Activated CD4-positive, alpha-beta T cell treated with anti-CD3 and anti-CD28 coated beads, Interleukin-2, amount 10 ng/mL, durations not matched to agents 7 days and 5 days (primary cell): ENCODE measurements at regions of chr10 and their contacts with region 1.

Region 1: DNA sequence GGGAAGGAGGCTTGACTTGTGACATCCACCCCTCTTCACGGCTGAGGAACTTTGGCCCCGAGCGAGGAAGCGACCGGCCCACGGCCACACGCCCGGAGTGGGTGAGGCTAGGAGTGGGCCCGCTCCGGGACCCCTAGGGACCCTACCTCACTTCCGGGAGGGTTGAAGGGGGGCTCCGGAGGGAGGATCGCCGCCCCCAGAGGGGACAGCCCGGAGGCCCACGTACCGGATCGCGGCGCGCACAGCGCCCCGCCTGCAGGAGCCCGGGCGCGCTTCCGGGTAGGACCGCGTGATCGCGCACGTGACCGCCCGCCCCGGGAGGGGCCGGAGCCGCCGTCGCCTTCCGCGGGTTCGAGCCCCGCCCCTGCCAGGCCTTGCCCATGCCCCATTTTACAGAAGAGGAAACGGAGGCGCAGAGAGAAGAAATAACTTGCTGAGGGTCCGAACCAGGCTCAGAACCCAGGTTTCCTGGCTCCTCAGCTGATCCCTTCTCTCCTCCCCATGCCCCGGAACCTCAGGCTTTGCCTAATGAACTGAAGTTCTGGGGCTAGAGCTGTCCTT is at the start of gene HPS1:
- DNase-seq: peak; percentile 83
- H3K4me3 Mint-ChIP-seq: peak within 1 kb of the TSS; percentile 94
- H3K27ac Mint-ChIP-seq: peak within 1 kb of the TSS; percentile 94
- H3K4me1 Mint-ChIP-seq: peaks cover 40% of the 10 kb centered on the region
- H3K27me3 Mint-ChIP-seq: peaks cover 14% of the 10 kb centered on the region
- total RNA-seq, gene HPS1: 95.5 to 102 TPM

Region 2: GRCh38 chr10:98423691-98424120 is 23.0 kb before region 1 on chr10:
- CTCF ChIA-PET with region 1: interaction called, 10 read pairs
- POLR2A ChIA-PET with region 1: no interaction called
- DNase-seq: no peak
- H3K4me3 Mint-ChIP-seq: no peak overlapping the region
- H3K27ac Mint-ChIP-seq: no peak overlapping the region
- H3K4me1 Mint-ChIP-seq: no peaks in the 10 kb centered on the region
- H3K27me3 Mint-ChIP-seq: no peaks in the 10 kb centered on the region

Region 3: GRCh38 chr10:98460837-98461499 is 14.2 kb after region 1 on chr10:
- CTCF ChIA-PET with region 1: no interaction called
- POLR2A ChIA-PET with region 1: no interaction called
- DNase-seq: no peak
- H3K4me3 Mint-ChIP-seq: no peak overlapping the region
- H3K27ac Mint-ChIP-seq: no peak overlapping the region
- H3K4me1 Mint-ChIP-seq: no peaks in the 10 kb centered on the region
- H3K27me3 Mint-ChIP-seq: peaks cover 9% of the 10 kb centered on the region